HepG2 (cell line): ENCODE measurements at regions of chr5 and their contacts with region 1.

Region 1: GRCh38 chr5:43040287-43041098 is at the start of gene ANXA2R:
- DNase-seq: peak; percentile 81
- ATAC-seq: peak; percentile 55
- H3K4me3 ChIP-seq: peak within 1 kb of the TSS; percentile 77 to 82 (median 81)
- H3K27ac ChIP-seq: peak within 1 kb of the TSS; percentile 82
- H3K4me1 ChIP-seq: peaks cover 17% of the 10 kb centered on the region
- H3K27me3 ChIP-seq: no peaks in the 10 kb centered on the region; a peak in 1 of 5 replicates
- CTCF ChIP-seq: peak; percentile 85
- EP300 ChIP-seq: no peak
- POLR2A ChIP-seq: no peak; a peak in 1 of 4 replicates
- RAD21 ChIP-seq: no peak
- total RNA-seq, gene ANXA2R: 0.76 and 0.95 TPM in 2 replicates

Region 2: GRCh38 chr5:42798284-42799240 is 241.9 kb before region 1 on chr5:
- CTCF ChIA-PET with region 1: no interaction called
- POLR2A ChIA-PET with region 1: no interaction called
- in situ Hi-C with region 1: no loop called
- intact Hi-C with region 1: no loop called
- DNase-seq: peak; percentile 28
- ATAC-seq: peak; percentile 70
- H3K4me3 ChIP-seq: no peak overlapping the region
- H3K27ac ChIP-seq: no peak overlapping the region
- H3K4me1 ChIP-seq: no peaks in the 10 kb centered on the region
- H3K27me3 ChIP-seq: no peaks in the 10 kb centered on the region
- CTCF ChIP-seq: no peak
- EP300 ChIP-seq: no peak
- POLR2A ChIP-seq: peak; percentile 31 to 44; a peak in 2 of 4 replicates
- RAD21 ChIP-seq: no peak

Region 3: DNA sequence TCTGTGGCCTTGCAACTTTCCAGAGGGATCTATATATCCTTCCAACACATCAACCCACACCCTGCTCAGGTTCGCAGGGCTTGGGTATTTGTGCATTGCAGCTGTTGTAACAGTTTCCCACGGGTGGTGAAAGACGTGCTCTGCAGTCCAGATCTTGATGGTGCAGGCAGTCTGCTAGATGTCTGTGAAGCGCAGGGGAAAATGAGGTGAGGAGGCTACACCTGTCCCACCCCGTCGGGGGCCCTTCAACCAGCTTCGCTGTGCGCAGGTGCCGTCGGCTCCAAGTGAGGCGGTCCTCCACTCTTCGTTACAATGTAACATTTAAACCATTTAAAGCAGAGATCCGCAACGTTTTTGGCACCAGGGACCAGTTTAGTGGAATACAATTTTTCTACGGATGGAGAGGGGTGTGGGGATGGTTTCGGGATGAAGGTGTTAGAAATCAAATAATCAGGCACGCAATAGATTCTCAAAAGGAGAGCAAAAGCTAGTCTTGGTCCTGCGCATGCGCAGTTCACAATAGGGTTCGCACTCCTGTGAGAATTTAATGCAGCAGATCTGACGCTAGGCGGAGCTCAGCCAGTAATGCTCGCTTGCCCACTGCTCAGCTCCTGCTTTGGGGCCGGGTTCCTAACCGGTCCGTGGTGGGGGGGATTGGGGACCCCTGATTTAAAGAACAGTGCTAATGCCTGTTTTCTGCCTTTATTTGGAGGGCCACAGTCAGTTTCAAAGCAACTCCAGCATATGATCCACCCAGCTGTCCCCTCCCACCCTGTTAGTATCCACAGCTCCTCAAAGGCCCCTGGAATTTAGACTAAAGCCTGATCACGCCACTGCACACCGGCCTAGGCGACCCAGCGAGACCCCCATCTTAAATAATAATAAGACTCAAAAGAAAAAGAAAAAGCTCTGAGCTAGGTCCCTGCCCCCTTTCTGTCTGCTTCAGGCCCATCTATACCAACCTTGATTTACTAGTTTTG is 131.7 kb before region 1 on chr5:
- CTCF ChIA-PET with region 1: interaction called, 4 read pairs
- POLR2A ChIA-PET with region 1: interaction called, 4 read pairs
- in situ Hi-C with region 1: no loop called
- intact Hi-C with region 1: loop called (anchors 1 kb)
- DNase-seq: peak; percentile 81
- ATAC-seq: peak; percentile 92
- H3K4me3 ChIP-seq: peak overlapping the region; percentile 25 to 67 (median 61)
- H3K27ac ChIP-seq: no peak overlapping the region
- H3K4me1 ChIP-seq: peaks cover 17% of the 10 kb centered on the region
- H3K27me3 ChIP-seq: no peaks in the 10 kb centered on the region
- CTCF ChIP-seq: peak; percentile 92
- EP300 ChIP-seq: no peak
- POLR2A ChIP-seq: no peak
- RAD21 ChIP-seq: peak; percentile 65; the same call in 1 of the 2 replicates

Region 4: DNA sequence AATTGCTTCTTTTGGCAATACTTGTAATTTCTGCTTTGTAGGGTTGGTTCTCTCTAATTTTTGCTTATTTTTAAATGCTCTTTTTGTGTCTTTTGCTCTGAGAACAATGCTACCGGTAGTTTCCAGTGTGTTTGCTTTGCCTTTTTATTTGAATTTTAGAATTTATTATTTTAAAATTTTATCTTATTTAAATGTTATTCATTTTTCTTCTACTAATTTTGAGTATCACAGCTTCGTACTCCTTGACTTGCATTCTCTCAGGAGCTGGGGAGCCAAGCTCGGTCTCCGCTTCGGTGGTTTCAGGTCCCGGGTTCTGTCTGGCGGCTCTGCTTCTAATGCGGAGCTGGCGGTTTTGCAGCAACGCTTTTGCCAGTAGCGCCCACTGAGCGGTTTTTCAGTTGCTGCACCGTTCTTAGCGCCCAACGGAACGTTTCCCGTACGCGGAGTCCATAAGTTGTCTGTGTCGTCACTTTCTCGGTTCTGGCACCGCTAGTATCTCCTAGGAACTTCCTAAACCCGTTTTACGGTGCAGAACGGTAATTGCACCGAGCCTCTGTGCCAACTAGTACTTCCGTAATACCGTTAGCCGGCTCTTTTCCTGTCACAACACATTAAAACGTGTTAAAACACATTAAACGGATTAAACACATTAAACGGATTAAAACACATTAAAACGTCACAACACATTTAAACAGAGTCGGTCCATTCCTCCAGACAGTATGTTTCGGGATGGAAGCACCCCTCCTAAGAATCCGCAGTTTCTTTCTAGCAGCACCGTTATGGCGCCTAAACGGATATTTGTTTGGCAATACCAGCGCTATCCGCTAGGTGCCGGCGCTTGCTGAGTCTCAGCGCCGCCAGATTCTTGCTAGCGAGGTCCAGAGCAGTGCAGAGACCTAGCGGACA is 46.0 kb before region 1 on chr5:
- CTCF ChIA-PET with region 1: interaction called, 15 read pairs
- POLR2A ChIA-PET with region 1: interaction called, 8 read pairs
- in situ Hi-C with region 1: no loop called
- intact Hi-C with region 1: loop called (anchors 2 kb)
- DNase-seq: peak; percentile 81
- ATAC-seq: peak; percentile 86
- H3K4me3 ChIP-seq: peak overlapping the region; percentile 75 to 93 (median 77)
- H3K27ac ChIP-seq: peak overlapping the region; percentile 64
- H3K4me1 ChIP-seq: peaks cover 25% of the 10 kb centered on the region
- H3K27me3 ChIP-seq: no peaks in the 10 kb centered on the region
- CTCF ChIP-seq: peak; percentile 87
- EP300 ChIP-seq: no peak
- POLR2A ChIP-seq: peak in 1 of 2 experiments; percentile 43; a peak in 1 of 4 replicates
- RAD21 ChIP-seq: 0 out of 2 replicates have a peak, but pooled peaks have one; percentile 40

Region 5: GRCh38 chr5:43008369-43009153 is 31.9 kb before region 1 on chr5:
- CTCF ChIA-PET with region 1: interaction called, 10 read pairs
- POLR2A ChIA-PET with region 1: interaction called, 15 read pairs
- in situ Hi-C with region 1: no loop called
- intact Hi-C with region 1: loop called (anchors 2 kb)
- DNase-seq: peak; percentile 89
- ATAC-seq: peak; percentile 71
- H3K4me3 ChIP-seq: peak overlapping the region; percentile 73 to 94 (median 78)
- H3K27ac ChIP-seq: peak overlapping the region; percentile 84
- H3K4me1 ChIP-seq: peaks cover 12% of the 10 kb centered on the region
- H3K27me3 ChIP-seq: no peaks in the 10 kb centered on the region; a peak in 1 of 5 replicates
- CTCF ChIP-seq: peak; percentile 76
- EP300 ChIP-seq: peak in 1 of 2 experiments; percentile 53; a peak in 1 of 4 replicates
- POLR2A ChIP-seq: peak; percentile 45 to 60; a peak in 3 of 4 replicates
- RAD21 ChIP-seq: peak; percentile 14; the same call in 1 of the 2 replicates

Region 6: GRCh38 chr5:43019614-43020293 is 20.7 kb before region 1 on chr5:
- CTCF ChIA-PET with region 1: interaction called, 13 read pairs
- POLR2A ChIA-PET with region 1: interaction called, 30 read pairs
- in situ Hi-C with region 1: no loop called
- intact Hi-C with region 1: loop called (anchors 1 kb)
- DNase-seq: peak; percentile 88
- ATAC-seq: peak; percentile 83
- H3K4me3 ChIP-seq: peak overlapping the region; percentile 69 to 86 (median 82)
- H3K27ac ChIP-seq: peak overlapping the region; percentile 92
- H3K4me1 ChIP-seq: peaks cover 39% of the 10 kb centered on the region
- H3K27me3 ChIP-seq: no peaks in the 10 kb centered on the region; a peak in 1 of 5 replicates
- CTCF ChIP-seq: peak; percentile 44
- EP300 ChIP-seq: no peak
- POLR2A ChIP-seq: no peak
- RAD21 ChIP-seq: no peak

Region 7: GRCh38 chr5:43061352-43062075 is 21.0 kb after region 1 on chr5:
- CTCF ChIA-PET with region 1: interaction called, 29 read pairs
- POLR2A ChIA-PET with region 1: interaction called, 39 read pairs
- in situ Hi-C with region 1: no loop called
- intact Hi-C with region 1: loop called (anchors 1 kb)
- DNase-seq: no peak
- ATAC-seq: no peak
- H3K4me3 ChIP-seq: no peak overlapping the region
- H3K27ac ChIP-seq: no peak overlapping the region
- H3K4me1 ChIP-seq: peaks cover 53% of the 10 kb centered on the region
- H3K27me3 ChIP-seq: no peaks in the 10 kb centered on the region; a peak in 1 of 5 replicates
- CTCF ChIP-seq: no peak
- EP300 ChIP-seq: no peak
- POLR2A ChIP-seq: no peak
- RAD21 ChIP-seq: no peak

Region 8: GRCh38 chr5:43066799-43067741 is 26.6 kb after region 1 on chr5:
- CTCF ChIA-PET with region 1: interaction called, 29 read pairs
- POLR2A ChIA-PET with region 1: interaction called, 39 read pairs
- in situ Hi-C with region 1: no loop called
- intact Hi-C with region 1: loop called (anchors 1 kb)
- DNase-seq: peak; percentile 87
- ATAC-seq: peak; percentile 83
- H3K4me3 ChIP-seq: peak overlapping the region; percentile 82 to 92 (median 83)
- H3K27ac ChIP-seq: peak overlapping the region; percentile 98
- H3K4me1 ChIP-seq: peaks cover 35% of the 10 kb centered on the region
- H3K27me3 ChIP-seq: no peaks in the 10 kb centered on the region; a peak in 1 of 5 replicates
- CTCF ChIP-seq: peak; percentile 21; the same call in 1 of the 2 replicates
- EP300 ChIP-seq: peak; percentile 38 to 84; a peak in 3 of 4 replicates
- POLR2A ChIP-seq: peak; percentile 15 to 35; a peak in 3 of 4 replicates
- RAD21 ChIP-seq: no peak